ENCODE measurements at regions of chr19 and their contacts with region 1.

Region 1: GRCh38 chr19:6021878-6022569 is 44.1 kb upstream of the RANBP3 start:
- DNase-seq: peak; percentile 77 to 85 (median 83)
- ATAC-seq: peak; percentile 89 to 95 (median 92)
- H3K4me3 ChIP-seq: no peak overlapping the region
- H3K27ac ChIP-seq: peak overlapping the region in 2 of 3 donors; percentile 10
- H3K4me1 ChIP-seq: peaks cover 0 to 27% (median 8%) of the 10 kb centered on the region in 4 donors
- H3K27me3 ChIP-seq: no peaks in the 10 kb centered on the region
- CTCF ChIP-seq: peak; percentile 83 to 92 (median 90)
- POLR2A ChIP-seq: no peak

Region 2: GRCh38 chr19:5916181-5916708 is 105.8 kb before region 1 on chr19:
- intact Hi-C with region 1: no loop called
- DNase-seq: no peak
- ATAC-seq: no peak
- H3K4me3 ChIP-seq: no peak overlapping the region
- H3K27ac ChIP-seq: no peak overlapping the region
- H3K4me1 ChIP-seq: peaks cover 0 to 10% (median 5%) of the 10 kb centered on the region in 4 donors
- H3K27me3 ChIP-seq: no peaks in the 10 kb centered on the region
- CTCF ChIP-seq: no peak
- POLR2A ChIP-seq: no peak

Region 3: GRCh38 chr19:5987077-5987818 is 34.8 kb before region 1 on chr19:
- intact Hi-C with region 1: loop called (anchors 5 kb)
- DNase-seq: peak; percentile 75 to 87 (median 81)
- ATAC-seq: peak; percentile 83 to 92 (median 86)
- H3K4me3 ChIP-seq: peak overlapping the region; percentile 11 to 28 (median 18)
- H3K27ac ChIP-seq: peak overlapping the region in 1 of 3 donors; percentile 32
- H3K4me1 ChIP-seq: peaks cover 0 to 24% (median 4%) of the 10 kb centered on the region in 4 donors
- H3K27me3 ChIP-seq: no peaks in the 10 kb centered on the region
- CTCF ChIP-seq: peak; percentile 95 to 97 (median 96)
- POLR2A ChIP-seq: no peak

Measured in right lobe of liver (tissue), 6 donors.